ENCODE measurements at regions of chr1 and their contacts with region 1.

Region 1: DNA sequence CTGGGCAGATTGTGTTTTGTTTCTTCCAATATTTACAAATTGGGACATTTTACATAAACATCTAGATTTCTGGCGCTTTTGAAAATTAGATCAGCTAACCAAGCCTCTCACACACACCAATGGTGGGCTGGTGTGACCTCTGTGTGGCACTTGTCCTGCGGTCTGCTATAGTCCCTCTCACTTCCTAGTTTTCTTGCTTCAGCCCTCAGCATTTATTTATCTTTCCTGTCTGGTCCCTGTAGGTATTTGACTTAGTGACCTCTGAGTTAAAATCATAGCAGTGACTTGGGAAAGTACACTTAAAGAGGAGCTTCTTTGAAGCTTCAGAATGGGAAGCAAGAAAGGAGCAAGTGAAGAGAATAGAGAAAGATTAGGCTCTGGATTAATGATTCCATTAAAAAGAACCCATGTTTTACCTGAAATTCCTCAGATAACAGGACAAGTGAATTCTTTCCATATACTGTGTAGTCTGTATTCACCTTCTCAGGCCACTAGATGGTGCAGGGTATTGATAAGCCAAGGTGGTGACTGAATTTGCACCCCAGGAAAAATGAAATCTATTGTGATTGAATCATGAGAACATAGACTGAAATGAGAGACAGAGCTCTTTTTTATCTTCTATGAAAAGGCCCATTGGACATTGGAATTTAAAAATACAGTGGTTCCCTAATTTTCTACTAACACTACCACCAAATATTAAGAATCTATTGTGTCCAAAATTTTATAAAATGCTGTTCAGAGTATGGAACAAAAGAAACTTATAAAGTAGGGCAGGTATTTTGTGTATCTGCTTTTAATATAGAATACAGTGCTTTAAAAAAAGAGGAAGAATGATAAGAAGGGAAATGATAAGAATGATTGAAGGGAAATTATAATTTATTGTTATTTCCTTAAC is 7.1 kb upstream of the DIPK1A start:
- DNase-seq: no peak
- H3K4me3 Mint-ChIP-seq: no peak overlapping the region
- H3K27ac Mint-ChIP-seq: no peak overlapping the region
- H3K4me1 Mint-ChIP-seq: peaks cover 42% of the 10 kb centered on the region
- H3K27me3 Mint-ChIP-seq: no peaks in the 10 kb centered on the region

Region 2: GRCh38 chr1:92987462-92987861 is 19.1 kb after region 1 on chr1:
- intact Hi-C with region 1: no loop called
- DNase-seq: no peak
- H3K4me3 Mint-ChIP-seq: no peak overlapping the region
- H3K27ac Mint-ChIP-seq: no peak overlapping the region
- H3K4me1 Mint-ChIP-seq: peaks cover 58% of the 10 kb centered on the region
- H3K27me3 Mint-ChIP-seq: no peaks in the 10 kb centered on the region

Region 3: GRCh38 chr1:93061895-93062792 is 93.8 kb after region 1 on chr1:
- intact Hi-C with region 1: loop called (anchors 2 kb)
- DNase-seq: peak; percentile 14
- H3K4me3 Mint-ChIP-seq: no peak overlapping the region
- H3K27ac Mint-ChIP-seq: no peak overlapping the region
- H3K4me1 Mint-ChIP-seq: no peaks in the 10 kb centered on the region
- H3K27me3 Mint-ChIP-seq: peaks cover 34% of the 10 kb centered on the region

Region 4: DNA sequence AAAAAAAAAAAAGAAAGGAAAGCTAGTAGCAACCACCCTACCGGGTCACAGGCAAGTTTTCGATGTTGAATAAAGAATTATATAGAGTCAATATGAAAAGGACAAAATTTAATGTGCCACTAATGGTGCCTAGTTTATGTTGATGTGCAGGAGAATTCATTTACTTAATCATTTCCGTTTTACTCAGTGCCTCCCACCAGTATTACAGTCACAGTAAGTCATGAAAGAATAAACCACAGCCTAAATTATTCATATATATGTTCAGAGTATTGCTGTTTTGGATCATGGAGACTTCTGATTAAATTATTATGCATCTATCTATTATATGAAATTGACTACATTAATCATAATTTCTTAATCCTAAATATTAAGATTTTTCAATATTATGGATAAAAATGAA is 514.8 kb after region 1 on chr1:
- intact Hi-C with region 1: no loop called
- DNase-seq: no peak
- H3K4me3 Mint-ChIP-seq: no peak overlapping the region
- H3K27ac Mint-ChIP-seq: no peak overlapping the region
- H3K4me1 Mint-ChIP-seq: no peaks in the 10 kb centered on the region
- H3K27me3 Mint-ChIP-seq: peaks cover 4% of the 10 kb centered on the region